PC-3 (cell line): ENCODE measurements at regions of chr19 and their contacts with region 1.

Region 1: DNA sequence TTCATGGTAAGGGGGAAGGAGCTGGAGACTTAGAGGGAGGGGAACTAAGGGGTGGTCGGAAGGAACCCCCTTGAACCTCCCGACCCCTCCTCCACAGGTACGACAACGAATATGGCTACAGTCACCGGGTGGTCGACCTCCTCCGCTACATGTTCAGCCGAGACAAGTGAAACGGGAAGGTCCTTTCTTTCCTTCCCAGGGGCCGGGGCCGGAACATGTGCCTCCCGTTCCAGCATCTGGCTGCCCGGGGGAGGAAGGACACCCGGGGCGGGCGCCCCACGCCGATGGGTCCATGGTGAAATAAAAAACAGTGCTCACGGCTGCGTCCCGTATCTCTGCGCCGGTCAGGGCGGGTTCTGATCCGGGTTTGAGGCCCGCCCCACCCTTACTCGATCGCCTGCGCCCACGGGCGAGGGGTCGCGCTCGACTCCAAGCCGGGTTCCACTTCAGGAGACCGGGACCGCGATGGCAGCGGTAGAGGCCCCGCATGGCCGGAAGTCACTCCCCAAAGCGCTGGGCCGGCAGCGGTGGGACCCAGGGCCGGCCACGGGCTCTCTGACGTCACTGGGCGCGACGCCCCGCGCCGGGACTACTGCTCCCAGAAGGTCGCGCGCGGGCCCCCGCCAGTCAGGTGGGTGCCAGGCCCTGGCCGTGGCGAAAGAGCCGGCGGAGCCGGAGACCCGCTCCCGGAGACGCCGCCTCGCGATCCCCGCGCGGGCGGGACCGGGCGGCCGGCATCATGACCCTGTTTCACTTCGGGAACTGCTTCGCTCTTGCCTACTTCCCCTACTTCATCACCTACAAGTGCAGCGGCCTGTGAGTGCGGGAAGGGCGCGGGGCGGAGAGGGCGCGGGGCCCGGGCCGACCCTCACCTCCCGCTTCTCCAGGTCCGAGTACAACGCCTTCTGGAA is at the start of gene TMEM147:
- DNase-seq: peak; percentile 84
- ATAC-seq: peak; percentile 94
- H3K4me3 ChIP-seq: peak within 1 kb of the TSS; percentile 88
- H3K27ac ChIP-seq: peak within 1 kb of the TSS; percentile 48
- H3K4me1 ChIP-seq: peaks cover 14% of the 10 kb centered on the region; the same call in 1 of the 2 replicates
- H3K27me3 ChIP-seq: no peaks in the 10 kb centered on the region
- CTCF ChIP-seq: no peak
- total RNA-seq, gene TMEM147: 191 and 206 TPM in 2 replicates

Region 2: DNA sequence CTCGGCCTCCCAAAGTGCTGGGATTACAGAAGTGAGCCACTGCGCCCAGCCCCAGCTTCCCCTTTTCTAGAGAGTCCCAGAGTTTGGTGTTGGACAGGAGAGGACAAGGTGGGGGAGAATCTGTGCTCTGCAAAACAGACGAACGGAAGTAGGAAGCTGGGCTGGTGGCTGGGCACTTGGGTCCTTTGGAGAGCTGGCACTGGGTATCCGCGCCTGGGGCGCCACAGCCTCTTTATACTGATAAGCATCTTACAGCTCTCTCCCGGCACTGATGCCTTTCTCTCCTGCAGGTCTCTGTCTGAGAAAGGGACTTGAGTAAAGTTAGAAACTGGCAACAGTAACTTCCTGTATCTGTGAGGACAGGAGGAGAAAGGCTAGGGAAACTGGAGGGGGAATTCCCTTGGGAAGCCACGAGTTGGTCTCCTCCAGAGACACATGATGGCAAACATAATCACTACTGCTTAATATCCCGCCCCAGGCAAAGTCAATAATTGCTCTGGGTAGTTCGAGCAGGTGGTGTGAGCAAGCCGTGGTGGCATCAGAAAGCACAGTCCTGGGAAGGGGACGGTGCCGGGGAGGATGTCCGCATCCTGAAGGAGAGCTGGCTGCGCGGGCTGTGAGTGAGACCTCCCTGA is 96.1 kb before region 1 on chr19:
- CTCF ChIA-PET with region 1: no interaction called
- POLR2A ChIA-PET with region 1: no interaction called
- intact Hi-C with region 1: no loop called
- DNase-seq: peak; percentile 9
- ATAC-seq: no peak
- H3K4me3 ChIP-seq: no peak overlapping the region
- H3K27ac ChIP-seq: no peak overlapping the region
- H3K4me1 ChIP-seq: no peaks in the 10 kb centered on the region
- H3K27me3 ChIP-seq: peaks cover 21% of the 10 kb centered on the region
- CTCF ChIP-seq: no peak

Region 3: DNA sequence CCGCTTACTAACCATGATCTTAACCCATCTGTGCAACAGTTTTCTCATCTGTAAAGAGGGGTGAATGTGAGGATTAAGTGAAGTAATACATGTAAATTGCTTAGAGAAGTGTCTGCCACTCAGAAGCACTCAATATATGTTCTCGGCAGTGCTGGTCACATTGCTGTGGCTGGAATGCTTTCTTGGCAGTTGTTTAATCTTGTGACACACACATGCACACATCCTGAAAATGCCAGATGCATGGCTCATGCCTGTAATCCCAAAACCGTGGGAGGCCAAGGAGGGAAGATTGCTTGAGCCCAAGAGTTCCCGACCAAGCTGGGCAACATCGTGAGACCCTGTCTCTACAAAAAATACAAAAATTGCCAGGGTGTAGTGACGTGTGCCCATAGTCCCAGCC is 26.9 kb before region 1 on chr19:
- CTCF ChIA-PET with region 1: no interaction called
- POLR2A ChIA-PET with region 1: interaction called, 6 read pairs
- intact Hi-C with region 1: loop called (anchors 2 kb)
- DNase-seq: peak; percentile 84
- ATAC-seq: peak; percentile 78
- H3K4me3 ChIP-seq: no peak overlapping the region
- H3K27ac ChIP-seq: peak overlapping the region; percentile 38
- H3K4me1 ChIP-seq: peaks cover 19% of the 10 kb centered on the region
- H3K27me3 ChIP-seq: no peaks in the 10 kb centered on the region
- CTCF ChIP-seq: no peak

Region 4: DNA sequence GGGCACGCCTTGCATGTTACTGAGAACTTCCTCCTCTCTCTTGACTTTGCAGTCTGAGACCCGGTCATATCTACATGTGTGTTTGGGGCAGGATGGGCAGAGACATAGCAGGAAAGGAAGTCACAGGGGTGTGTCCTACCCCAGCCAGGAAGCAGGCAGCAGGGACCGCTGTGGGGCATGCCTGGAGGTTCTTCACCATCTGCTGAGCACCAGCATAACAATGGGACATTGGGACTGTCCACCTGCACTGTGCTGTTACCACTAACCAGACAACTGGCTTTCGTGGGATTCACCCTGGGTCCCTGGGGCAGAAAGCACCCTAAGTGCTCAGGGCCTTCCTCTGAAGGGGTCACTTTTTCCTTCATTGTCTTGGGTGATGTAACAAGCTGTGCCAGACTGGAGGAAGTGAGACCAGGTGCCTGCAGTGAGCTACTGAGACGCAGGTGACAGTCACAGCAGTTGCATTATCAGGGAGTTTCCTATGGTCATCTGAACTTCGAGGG is 64.6 kb after region 1 on chr19:
- CTCF ChIA-PET with region 1: no interaction called
- POLR2A ChIA-PET with region 1: no interaction called
- intact Hi-C with region 1: loop called (anchors 2 kb)
- DNase-seq: no peak
- ATAC-seq: no peak
- H3K4me3 ChIP-seq: no peak overlapping the region
- H3K27ac ChIP-seq: no peak overlapping the region
- H3K4me1 ChIP-seq: peaks cover 5% of the 10 kb centered on the region; the same call in 1 of the 2 replicates
- H3K27me3 ChIP-seq: no peaks in the 10 kb centered on the region
- CTCF ChIP-seq: no peak

Region 5: DNA sequence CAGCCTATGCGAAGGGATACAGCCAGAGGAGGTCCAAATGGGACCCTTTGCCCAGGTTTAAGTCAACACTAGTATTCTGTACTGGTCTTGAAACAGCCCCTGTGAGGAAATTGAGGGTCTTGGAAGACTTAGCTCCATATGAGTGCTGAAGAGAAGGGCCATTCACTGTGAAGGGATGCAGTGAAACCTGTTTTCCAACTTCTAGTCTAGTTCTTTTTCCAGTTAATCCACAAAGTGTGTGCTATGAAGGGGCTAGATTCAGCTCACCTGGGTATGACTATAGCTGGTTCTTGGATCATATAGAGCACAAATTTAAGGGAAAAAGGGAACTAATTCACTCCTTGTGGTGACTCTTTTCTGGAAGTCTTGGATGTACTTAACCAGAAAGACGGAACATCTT is 163.1 kb after region 1 on chr19:
- CTCF ChIA-PET with region 1: no interaction called
- POLR2A ChIA-PET with region 1: interaction called, 16 read pairs
- intact Hi-C with region 1: no loop called
- DNase-seq: peak; percentile 42
- ATAC-seq: no peak
- H3K4me3 ChIP-seq: no peak overlapping the region
- H3K27ac ChIP-seq: no peak overlapping the region
- H3K4me1 ChIP-seq: no peaks in the 10 kb centered on the region
- H3K27me3 ChIP-seq: no peaks in the 10 kb centered on the region
- CTCF ChIP-seq: no peak